PC-9 (cell line): ENCODE measurements at regions of chrX and their contacts with region 1.

Region 1: GRCh38 chrX:8273451-8273894 is 102.4 kb upstream of the VCX2 start:
- DNase-seq: peak; percentile 52 to 99
- H3K4me3 ChIP-seq: no peak overlapping the region
- H3K27ac ChIP-seq: peak overlapping the region; percentile 86
- H3K4me1 ChIP-seq: peaks cover 26% of the 10 kb centered on the region
- H3K27me3 ChIP-seq: no peaks in the 10 kb centered on the region
- CTCF ChIP-seq: no peak

Region 2: DNA sequence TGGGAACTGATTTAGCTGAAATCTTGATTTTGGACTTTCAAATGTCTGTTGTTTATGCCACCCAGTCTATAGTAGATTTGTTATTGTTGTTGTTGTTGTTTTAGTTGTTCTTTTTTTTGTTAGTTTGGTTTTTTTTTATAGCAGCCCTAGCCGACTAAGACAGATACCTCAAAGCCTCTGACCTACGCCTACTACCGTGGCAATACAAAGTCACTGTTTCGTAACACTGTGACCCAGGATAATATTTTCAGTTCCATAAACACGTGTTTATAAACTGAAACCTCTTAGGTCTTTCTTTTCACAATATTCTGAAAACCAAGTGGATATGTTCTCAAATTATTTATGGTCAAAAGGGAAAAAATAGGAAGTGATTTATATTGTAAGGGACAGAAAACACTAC is 135.2 kb before region 1 on chrX:
- CTCF ChIA-PET with region 1: no interaction called
- POLR2A ChIA-PET with region 1: no interaction called
- intact Hi-C with region 1: loop called (anchors 1 kb)
- DNase-seq: no peak
- H3K4me3 ChIP-seq: no peak overlapping the region
- H3K27ac ChIP-seq: no peak overlapping the region
- H3K4me1 ChIP-seq: no peaks in the 10 kb centered on the region
- H3K27me3 ChIP-seq: no peaks in the 10 kb centered on the region
- CTCF ChIP-seq: no peak

Region 3: GRCh38 chrX:8191022-8191421 is 82.5 kb before region 1 on chrX:
- CTCF ChIA-PET with region 1: no interaction called
- POLR2A ChIA-PET with region 1: no interaction called
- intact Hi-C with region 1: loop called (anchors 1 kb)
- DNase-seq: peak; percentile 84 to 85
- H3K4me3 ChIP-seq: no peak overlapping the region
- H3K27ac ChIP-seq: peak overlapping the region; percentile 29; the same call in 1 of the 2 replicates
- H3K4me1 ChIP-seq: peaks cover 13% of the 10 kb centered on the region
- H3K27me3 ChIP-seq: no peaks in the 10 kb centered on the region
- CTCF ChIP-seq: no peak

Region 4: DNA sequence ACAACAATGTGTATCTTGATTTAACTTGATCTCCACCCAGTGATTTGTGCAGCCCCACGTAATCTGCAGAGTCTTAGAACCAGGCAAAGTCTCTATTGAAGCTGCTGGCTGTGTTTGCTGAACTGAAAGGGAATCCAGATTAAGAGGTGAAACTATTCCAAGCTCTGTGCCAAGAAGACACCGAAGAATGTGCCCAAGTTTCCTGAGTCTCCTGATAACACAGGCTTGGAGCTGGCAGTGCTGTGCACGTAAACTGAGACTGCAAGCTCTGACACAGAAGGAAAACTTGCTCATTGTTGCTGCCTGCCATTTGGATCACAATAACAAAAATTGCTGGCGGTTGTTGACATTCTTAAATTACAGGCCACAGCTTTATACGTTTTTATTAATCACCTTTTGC is 131.0 kb after region 1 on chrX:
- CTCF ChIA-PET with region 1: no interaction called
- POLR2A ChIA-PET with region 1: no interaction called
- intact Hi-C with region 1: loop called (anchors 1 kb)
- DNase-seq: peak; percentile 58 to 92
- H3K4me3 ChIP-seq: peak overlapping the region; percentile 28; the same call in 1 of the 2 replicates
- H3K27ac ChIP-seq: peak overlapping the region; percentile 71
- H3K4me1 ChIP-seq: peaks cover 23% of the 10 kb centered on the region
- H3K27me3 ChIP-seq: no peaks in the 10 kb centered on the region
- CTCF ChIP-seq: no peak

Region 5: GRCh38 chrX:8607326-8607725 is 333.9 kb after region 1 on chrX:
- CTCF ChIA-PET with region 1: no interaction called
- POLR2A ChIA-PET with region 1: no interaction called
- intact Hi-C with region 1: loop called (anchors 5 kb)
- DNase-seq: peak in 1 of 2 experiments; percentile 86
- H3K4me3 ChIP-seq: no peak overlapping the region
- H3K27ac ChIP-seq: peak overlapping the region; percentile 45
- H3K4me1 ChIP-seq: peaks cover 14% of the 10 kb centered on the region
- H3K27me3 ChIP-seq: no peaks in the 10 kb centered on the region
- CTCF ChIP-seq: no peak

Region 6: DNA sequence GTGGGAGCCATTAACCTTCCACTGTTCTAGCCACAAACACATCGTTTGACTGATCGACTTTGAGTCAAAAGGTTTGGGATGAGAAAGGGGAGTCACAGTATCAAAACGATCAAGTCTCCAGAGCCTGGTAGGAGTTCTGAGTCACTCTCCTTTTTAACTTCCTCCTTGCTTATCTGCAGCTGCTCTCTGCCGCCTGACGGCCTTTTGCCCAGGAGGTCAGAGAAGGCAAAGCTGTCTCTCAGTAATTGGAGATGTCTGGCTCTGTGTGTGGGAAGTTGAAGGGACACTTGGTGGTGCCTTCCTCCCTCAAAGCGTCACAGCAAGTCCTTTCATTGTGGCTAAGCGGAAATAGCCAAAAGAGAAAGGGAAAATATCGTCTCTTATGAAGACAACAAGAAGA is 395.3 kb after region 1 on chrX:
- CTCF ChIA-PET with region 1: no interaction called
- POLR2A ChIA-PET with region 1: no interaction called
- intact Hi-C with region 1: loop called (anchors 1 kb)
- DNase-seq: peak; percentile 50 to 82
- H3K4me3 ChIP-seq: peak overlapping the region; percentile 8; the same call in 1 of the 2 replicates
- H3K27ac ChIP-seq: peak overlapping the region; percentile 45
- H3K4me1 ChIP-seq: peaks cover 8% of the 10 kb centered on the region
- H3K27me3 ChIP-seq: no peaks in the 10 kb centered on the region
- CTCF ChIP-seq: no peak

Region 7: GRCh38 chrX:8731559-8732395 is 458.3 kb after region 1 on chrX and contains the start of gene ANOS1:
- CTCF ChIA-PET with region 1: no interaction called
- POLR2A ChIA-PET with region 1: no interaction called
- intact Hi-C with region 1: loop called (anchors 1 kb)
- DNase-seq: no peak
- H3K4me3 ChIP-seq: no peak within 1 kb of the TSS
- H3K27ac ChIP-seq: no peak within 1 kb of the TSS
- H3K4me1 ChIP-seq: peaks cover 11% of the 10 kb centered on the region
- H3K27me3 ChIP-seq: no peaks in the 10 kb centered on the region
- CTCF ChIP-seq: no peak
- total RNA-seq, gene ANOS1: 0.22 and 0.90 TPM in 2 replicates